ENCODE measurements at regions of chr10 and their contacts with region 1.

Region 1: DNA sequence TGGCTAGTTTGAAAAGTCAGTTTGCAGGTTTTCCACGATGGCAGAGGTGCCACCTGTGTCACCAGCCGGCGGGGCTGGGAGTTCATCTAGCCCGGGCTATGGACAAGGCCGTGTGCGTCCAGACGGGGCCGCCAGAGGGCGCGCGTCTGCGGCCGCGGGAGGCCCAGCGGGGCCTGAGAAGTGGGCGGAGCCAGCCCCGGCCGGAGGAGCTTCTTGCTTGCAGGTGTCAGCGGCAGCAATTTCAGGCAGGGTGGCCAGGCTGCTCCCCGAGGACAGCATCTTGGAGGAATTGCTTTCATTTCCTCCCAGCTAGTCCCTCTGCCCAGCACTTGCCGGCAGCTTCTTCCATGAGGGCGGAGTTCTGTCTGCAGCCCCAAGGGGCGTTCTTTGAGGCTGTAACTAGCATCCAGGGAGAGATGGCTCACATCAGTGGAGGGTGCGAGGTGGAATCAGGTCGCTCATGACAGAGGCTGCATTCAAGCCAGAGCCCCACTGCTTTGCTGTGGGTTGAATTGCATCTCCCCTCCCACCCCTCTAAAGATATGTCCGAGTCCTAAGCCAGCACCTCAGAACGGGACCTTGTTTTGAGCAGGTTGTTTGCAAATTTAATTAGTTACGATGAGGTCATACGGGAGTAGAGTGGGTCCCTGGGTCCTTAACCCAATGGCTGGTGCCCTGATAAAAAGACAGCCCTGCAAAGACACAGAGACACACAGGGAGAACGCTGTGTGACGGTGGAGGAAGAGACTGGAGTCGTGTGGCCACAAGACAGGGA is 85.9 kb upstream of the MKI67 start:
- DNase-seq: peak; percentile 66 to 91 (median 80)
- ATAC-seq: peak; percentile 87
- H3K4me3 ChIP-seq: peak overlapping the region; percentile 44
- H3K4me3 Mint-ChIP-seq: peak overlapping the region; percentile 75 to 91 (median 86)
- H3K27ac ChIP-seq: no peak overlapping the region
- H3K27ac Mint-ChIP-seq: peak overlapping the region; percentile 83 to 94 (median 88)
- H3K4me1 ChIP-seq: peaks cover 4 to 8% of the 10 kb centered on the region in 2 donors
- H3K4me1 Mint-ChIP-seq: peaks cover 10 to 25% (median 17%) of the 10 kb centered on the region in 7 donors
- H3K27me3 ChIP-seq: no peaks in the 10 kb centered on the region
- H3K27me3 Mint-ChIP-seq: peaks cover 0 to 21% (median 0%) of the 10 kb centered on the region in 5 donors

Region 2: DNA sequence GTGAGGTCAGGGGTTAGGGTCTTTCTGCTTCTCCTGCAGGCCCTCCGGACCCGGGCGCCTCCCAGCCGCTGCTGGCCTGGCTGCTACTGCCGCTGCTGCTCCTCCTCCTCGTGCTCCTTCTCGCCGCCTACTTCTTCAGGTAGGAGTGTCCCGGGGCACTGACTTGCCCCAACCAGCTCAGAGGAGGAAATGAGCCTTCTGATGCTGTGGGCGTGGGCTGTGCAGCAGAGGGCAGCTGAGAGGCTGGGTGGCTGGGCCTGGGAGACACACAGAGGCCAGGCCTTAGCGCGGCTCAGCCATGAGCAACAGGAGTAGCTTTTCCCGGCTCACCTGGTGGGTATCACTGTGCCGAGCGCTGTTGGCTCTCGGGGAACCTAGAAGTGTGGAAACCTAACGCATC is 164.8 kb before region 1 on chr10:
- CTCF ChIA-PET with region 1: no interaction called
- POLR2A ChIA-PET with region 1: no interaction called
- intact Hi-C with region 1: loop called in 1 of 2 experiments (anchors 1 kb)
- DNase-seq: peak; percentile 57 to 84 (median 80)
- ATAC-seq: peak; percentile 96
- H3K4me3 ChIP-seq: peak overlapping the region; percentile 60
- H3K4me3 Mint-ChIP-seq: peak overlapping the region; percentile 88 to 98 (median 96)
- H3K27ac ChIP-seq: peak overlapping the region; percentile 82
- H3K27ac Mint-ChIP-seq: peak overlapping the region; percentile 77 to 98 (median 95)
- H3K4me1 ChIP-seq: peaks cover 28 to 37% of the 10 kb centered on the region in 2 donors
- H3K4me1 Mint-ChIP-seq: peaks cover 13 to 72% (median 52%) of the 10 kb centered on the region in 7 donors
- H3K27me3 ChIP-seq: no peaks in the 10 kb centered on the region
- H3K27me3 Mint-ChIP-seq: no peaks in the 10 kb centered on the region

Region 3: DNA sequence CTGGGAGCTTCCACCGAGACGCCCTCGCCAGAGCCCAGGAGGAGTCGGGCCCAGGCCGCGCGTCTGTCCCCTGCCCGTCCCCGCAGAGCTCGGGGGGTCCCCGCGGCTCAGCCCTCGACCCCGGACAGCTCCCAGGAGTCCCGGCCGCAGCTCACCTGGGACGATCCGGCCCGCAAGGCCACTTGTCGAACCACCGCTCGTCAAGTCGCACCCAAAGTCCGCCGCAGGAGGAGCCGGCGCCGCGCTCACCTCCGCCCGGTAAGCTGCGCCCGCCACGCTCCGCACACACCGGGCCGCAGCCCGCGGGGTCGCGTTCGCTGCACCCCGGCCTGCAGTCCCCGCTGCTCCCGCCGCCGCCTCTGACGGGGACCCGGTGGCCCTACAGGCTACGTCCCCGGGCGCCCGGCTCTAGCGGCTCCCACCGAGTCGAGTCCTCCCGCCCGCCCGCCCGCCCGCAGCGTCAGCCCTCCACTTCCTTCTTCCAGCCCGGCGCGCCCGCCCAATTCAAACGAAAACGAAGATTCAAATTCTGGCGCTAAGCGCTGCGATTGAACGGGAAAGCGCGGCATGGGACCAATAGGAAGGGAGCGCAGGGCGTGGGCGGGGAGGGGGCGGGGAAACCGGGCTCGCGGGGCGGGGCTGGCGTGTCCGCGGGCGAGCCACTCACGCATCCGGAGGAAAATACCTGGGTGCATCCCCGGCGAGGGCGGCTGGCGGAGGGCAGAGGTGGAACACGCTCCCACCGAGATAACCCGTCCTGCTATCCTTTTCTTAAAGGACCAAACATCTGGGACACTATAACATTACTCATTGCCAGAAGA is 86.0 kb before region 1 on chr10 and contains the start of gene MKI67:
- CTCF ChIA-PET with region 1: no interaction called
- POLR2A ChIA-PET with region 1: no interaction called
- intact Hi-C with region 1: loop called (anchors 1 kb)
- DNase-seq: peak; percentile 68 to 88 (median 85)
- ATAC-seq: peak; percentile 98
- H3K4me3 ChIP-seq: peak within 1 kb of the TSS; percentile 82
- H3K4me3 Mint-ChIP-seq: peak within 1 kb of the TSS; percentile 86 to 94 (median 88)
- H3K27ac ChIP-seq: peak within 1 kb of the TSS; percentile 73
- H3K27ac Mint-ChIP-seq: peak within 1 kb of the TSS in 8 of 9 donors; percentile 56 to 97 (median 71)
- H3K4me1 ChIP-seq: peaks cover 9 to 18% of the 10 kb centered on the region in 2 donors
- H3K4me1 Mint-ChIP-seq: peaks cover 6 to 44% (median 19%) of the 10 kb centered on the region in 7 donors
- H3K27me3 ChIP-seq: peaks cover 10 to 11% of the 10 kb centered on the region in 2 donors
- H3K27me3 Mint-ChIP-seq: peaks cover 7 to 37% (median 33%) of the 10 kb centered on the region in 5 donors
- total RNA-seq, gene MKI67: 0.05 to 219 (median 1.6) TPM

Region 4: DNA sequence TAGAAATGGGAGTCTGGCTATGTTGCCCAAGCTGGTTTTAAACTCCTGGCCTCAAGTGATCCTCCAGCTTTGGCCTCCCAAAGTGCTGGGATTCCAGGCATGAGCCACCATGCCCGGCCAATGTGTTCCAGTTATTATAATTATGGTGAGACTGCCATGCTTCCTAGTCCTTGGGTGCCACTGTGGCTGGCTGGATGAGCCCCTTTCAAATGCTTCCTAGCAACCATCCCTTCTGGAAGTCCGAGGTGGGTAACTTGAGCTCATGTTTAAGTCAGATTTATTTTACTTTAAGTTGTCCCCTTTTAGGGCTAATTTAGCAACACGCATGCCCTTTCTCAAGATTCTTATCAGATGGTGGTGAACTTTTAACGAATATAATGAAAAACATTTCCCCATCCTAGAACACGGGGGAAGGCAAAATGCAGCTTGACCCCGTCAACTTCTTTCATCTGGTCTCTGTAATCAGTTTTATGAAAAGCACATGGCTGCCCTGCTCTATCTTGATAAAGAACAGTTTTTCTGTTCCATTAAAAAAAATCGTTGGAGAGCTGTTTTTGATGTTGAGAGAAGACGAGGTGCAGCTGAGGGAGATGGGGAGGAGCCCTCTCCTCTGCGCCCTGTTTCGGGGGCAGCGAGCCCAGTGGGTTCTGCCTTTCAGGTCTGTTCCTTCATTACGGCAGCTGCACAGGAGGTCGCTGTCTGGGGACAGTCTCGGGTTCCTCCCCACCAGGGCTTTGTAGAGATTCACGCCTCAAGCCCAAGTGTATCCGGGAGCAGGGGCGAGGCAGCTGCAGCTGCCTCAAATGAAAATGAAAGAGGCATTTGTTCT is 25.0 kb before region 1 on chr10:
- CTCF ChIA-PET with region 1: interaction called, 13 read pairs
- POLR2A ChIA-PET with region 1: no interaction called
- intact Hi-C with region 1: loop called in 1 of 2 experiments (anchors 2 kb)
- DNase-seq: peak in 5 of 9 donors; percentile 4 to 25 (median 20)
- ATAC-seq: peak; percentile 85
- H3K4me3 ChIP-seq: peak overlapping the region; percentile 51
- H3K4me3 Mint-ChIP-seq: peak overlapping the region; percentile 65 to 93 (median 86)
- H3K27ac ChIP-seq: peak overlapping the region; percentile 49
- H3K27ac Mint-ChIP-seq: peak overlapping the region; percentile 73 to 94 (median 87)
- H3K4me1 ChIP-seq: peaks cover 5 to 14% of the 10 kb centered on the region in 2 donors
- H3K4me1 Mint-ChIP-seq: peaks cover 5 to 51% (median 24%) of the 10 kb centered on the region in 7 donors
- H3K27me3 ChIP-seq: no peaks in the 10 kb centered on the region
- H3K27me3 Mint-ChIP-seq: peaks cover 0 to 13% (median 0%) of the 10 kb centered on the region in 5 donors

Region 5: GRCh38 chr10:129971381-129972144 is 1759.4 kb after region 1 on chr10:
- CTCF ChIA-PET with region 1: no interaction called
- POLR2A ChIA-PET with region 1: no interaction called
- intact Hi-C with region 1: loop called in 1 of 2 experiments (anchors 2 kb)
- DNase-seq: no peak
- ATAC-seq: peak; percentile 71
- H3K4me3 ChIP-seq: no peak overlapping the region
- H3K4me3 Mint-ChIP-seq: peak overlapping the region; percentile 29 to 86 (median 68)
- H3K27ac ChIP-seq: no peak overlapping the region
- H3K27ac Mint-ChIP-seq: peak overlapping the region in 3 of 9 donors; percentile 46 to 85 (median 69)
- H3K4me1 ChIP-seq: no peaks in the 10 kb centered on the region
- H3K4me1 Mint-ChIP-seq: peaks cover 8 to 25% (median 21%) of the 10 kb centered on the region in 7 donors
- H3K27me3 ChIP-seq: peaks cover 0 to 38% of the 10 kb centered on the region in 2 donors
- H3K27me3 Mint-ChIP-seq: peaks cover 51 to 70% (median 61%) of the 10 kb centered on the region in 5 donors

Measured in naive thymus-derived CD4-positive, alpha-beta T cell (primary cell).